H1 (cell line): ENCODE measurements at regions of chr10 and their contacts with region 1.

Region 1: DNA sequence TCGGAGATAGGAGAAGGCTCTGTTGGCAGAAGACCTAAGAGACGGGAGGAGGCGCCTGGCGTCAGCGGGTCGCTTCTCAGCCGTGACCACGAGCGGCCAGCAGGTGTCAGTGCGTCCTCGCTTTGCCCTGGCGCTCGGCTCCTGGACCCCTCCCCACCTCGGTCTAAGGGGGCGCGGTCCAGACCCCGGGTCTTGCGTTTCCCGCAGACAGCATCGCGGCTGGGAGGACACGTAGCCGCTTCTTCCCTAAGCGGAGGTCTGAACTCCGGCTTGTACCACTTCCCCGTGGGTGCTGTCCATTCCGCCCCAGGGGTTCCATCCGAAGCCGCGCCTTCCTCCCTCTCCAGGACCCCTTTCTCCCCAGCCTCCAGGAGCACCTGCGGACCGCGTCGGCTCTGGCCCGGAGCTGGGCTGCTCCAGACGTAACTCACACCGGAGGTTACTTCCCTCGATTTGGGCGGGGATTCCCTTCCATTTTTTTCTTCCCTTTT is 593 bp upstream of the ADRA2A start:
- DNase-seq: peak; percentile 63 to 96
- H3K4me3 ChIP-seq: peak overlapping the region; percentile 44 to 75 (median 70)
- H3K27ac ChIP-seq: no peak overlapping the region
- H3K4me1 ChIP-seq: peaks cover 0 to 7% (median 2%) of the 10 kb centered on the region in 4 experiments; a peak in 4 of 7 replicates
- H3K27me3 ChIP-seq: peaks cover 12 to 27% (median 24%) of the 10 kb centered on the region in 4 experiments
- CTCF ChIP-seq: peak; percentile 91 to 98 (median 98)
- EP300 ChIP-seq: no peak; a peak in 1 of 3 replicates
- POLR2A ChIP-seq: no peak
- RAD21 ChIP-seq: peak; percentile 98 to 99

Region 2: DNA sequence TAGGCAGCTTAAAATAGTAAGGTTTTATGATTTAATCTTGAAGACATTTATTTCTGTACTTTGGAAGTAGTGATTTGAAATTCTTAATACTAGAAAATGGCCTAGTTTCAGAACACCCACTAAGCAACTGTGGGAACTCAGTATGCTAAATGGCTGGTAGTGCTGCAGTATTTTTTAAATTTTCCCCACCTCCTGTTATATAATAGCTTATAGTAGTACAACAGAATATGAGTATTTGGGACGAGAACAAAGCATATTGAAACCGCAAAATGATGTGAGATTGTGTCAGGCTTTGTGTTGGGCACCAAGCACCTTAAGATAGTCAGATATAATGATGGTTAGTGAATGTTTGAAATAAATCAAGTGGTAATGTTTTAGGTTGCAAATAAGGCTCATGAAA is 148.8 kb before region 1 on chr10:
- CTCF ChIA-PET with region 1: no interaction called
- POLR2A ChIA-PET with region 1: no interaction called
- DNase-seq: no peak
- H3K4me3 ChIP-seq: no peak overlapping the region
- H3K27ac ChIP-seq: no peak overlapping the region
- H3K4me1 ChIP-seq: peaks cover 0 to 3% (median 0%) of the 10 kb centered on the region in 4 experiments; a peak in 1 of 7 replicates
- H3K27me3 ChIP-seq: no peaks in the 10 kb centered on the region
- CTCF ChIP-seq: no peak
- EP300 ChIP-seq: no peak
- POLR2A ChIP-seq: no peak
- RAD21 ChIP-seq: no peak

Region 3: DNA sequence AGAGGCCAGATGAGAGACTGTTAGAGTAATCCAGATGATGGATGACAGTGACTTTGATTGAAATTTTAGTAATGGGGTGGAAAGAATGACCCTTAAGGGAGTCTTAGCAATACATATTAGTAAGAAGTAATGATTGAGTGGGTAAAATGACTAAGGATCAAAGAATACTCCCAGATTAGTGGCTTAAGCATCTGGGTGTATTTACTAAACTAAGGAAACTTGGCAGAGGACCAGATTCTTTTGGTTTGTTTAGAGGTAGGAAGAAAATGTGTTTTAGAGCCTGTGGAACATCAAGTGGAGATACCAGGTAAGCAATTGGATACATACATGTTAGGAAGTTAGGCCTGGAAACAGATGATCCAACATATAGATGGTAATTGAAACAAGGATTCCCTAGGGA is 58.2 kb before region 1 on chr10:
- CTCF ChIA-PET with region 1: no interaction called
- POLR2A ChIA-PET with region 1: no interaction called
- DNase-seq: no peak
- H3K4me3 ChIP-seq: no peak overlapping the region
- H3K27ac ChIP-seq: no peak overlapping the region
- H3K4me1 ChIP-seq: no peaks in the 10 kb centered on the region
- H3K27me3 ChIP-seq: no peaks in the 10 kb centered on the region
- CTCF ChIP-seq: no peak
- EP300 ChIP-seq: no peak
- POLR2A ChIP-seq: no peak
- RAD21 ChIP-seq: no peak

Region 4: DNA sequence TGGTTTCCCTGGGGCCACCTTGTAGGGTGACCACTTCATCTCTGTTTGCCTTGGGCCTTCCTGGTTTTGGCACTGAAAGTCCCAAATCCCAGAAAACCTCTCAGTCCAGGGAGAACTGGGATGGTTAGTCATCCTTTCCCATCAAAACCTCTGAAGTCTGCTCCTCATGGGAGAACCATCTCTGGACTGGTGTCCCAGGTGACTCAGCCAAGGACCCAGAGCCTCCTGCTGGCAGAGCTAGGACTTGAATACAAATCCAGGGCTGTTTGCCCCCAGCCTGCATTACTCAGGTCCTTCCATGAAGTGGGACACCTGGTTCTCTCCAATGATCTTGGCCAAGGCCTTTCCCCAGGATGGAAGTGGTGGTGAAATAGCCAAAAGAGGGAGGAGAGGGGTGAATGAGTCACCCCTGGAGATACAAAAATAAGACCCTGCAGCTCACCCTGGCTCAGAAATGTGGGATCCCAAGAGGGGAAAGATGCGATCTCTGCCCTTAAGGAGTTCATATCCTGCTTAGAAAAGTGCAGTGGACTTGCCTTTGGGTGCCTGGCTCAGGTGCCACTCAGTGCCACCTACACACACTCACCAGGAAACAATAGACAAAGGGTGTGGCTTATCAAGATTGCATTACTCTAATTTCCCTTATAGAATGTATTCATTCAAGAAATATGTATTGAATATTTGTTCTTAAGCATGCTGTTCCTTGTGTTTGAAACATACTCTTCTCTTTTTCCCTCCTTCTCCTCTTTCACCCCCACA is 22.6 kb after region 1 on chr10:
- CTCF ChIA-PET with region 1: interaction called, 83 read pairs
- POLR2A ChIA-PET with region 1: no interaction called
- DNase-seq: no peak
- H3K4me3 ChIP-seq: no peak overlapping the region
- H3K27ac ChIP-seq: no peak overlapping the region
- H3K4me1 ChIP-seq: no peaks in the 10 kb centered on the region
- H3K27me3 ChIP-seq: no peaks in the 10 kb centered on the region
- CTCF ChIP-seq: no peak
- EP300 ChIP-seq: no peak
- POLR2A ChIP-seq: no peak
- RAD21 ChIP-seq: no peak

Region 5: GRCh38 chr10:111207500-111207899 is 131.3 kb after region 1 on chr10:
- CTCF ChIA-PET with region 1: interaction called, 68 read pairs
- POLR2A ChIA-PET with region 1: no interaction called
- DNase-seq: peak in 1 of 2 experiments; percentile 47
- H3K4me3 ChIP-seq: no peak overlapping the region
- H3K27ac ChIP-seq: no peak overlapping the region
- H3K4me1 ChIP-seq: peaks cover 0 to 3% (median 2%) of the 10 kb centered on the region in 4 experiments; a peak in 1 of 7 replicates
- H3K27me3 ChIP-seq: no peaks in the 10 kb centered on the region
- CTCF ChIP-seq: peak; percentile 59 to 69 (median 66)
- EP300 ChIP-seq: no peak
- POLR2A ChIP-seq: no peak
- RAD21 ChIP-seq: peak; percentile 78 to 80

Region 6: GRCh38 chr10:111281516-111281915 is 205.3 kb after region 1 on chr10:
- CTCF ChIA-PET with region 1: interaction called, 16 read pairs
- POLR2A ChIA-PET with region 1: no interaction called
- DNase-seq: peak in 1 of 2 experiments; percentile 48
- H3K4me3 ChIP-seq: no peak overlapping the region
- H3K27ac ChIP-seq: no peak overlapping the region
- H3K4me1 ChIP-seq: no peaks in the 10 kb centered on the region
- H3K27me3 ChIP-seq: peaks cover 0 to 1% (median 0%) of the 10 kb centered on the region in 4 experiments; a peak in 1 of 7 replicates
- CTCF ChIP-seq: peak in 2 of 3 experiments; percentile 52 to 56; a peak in 3 of 4 replicates
- EP300 ChIP-seq: no peak
- POLR2A ChIP-seq: no peak
- RAD21 ChIP-seq: peak; percentile 49 to 60; a peak in 3 of 4 replicates

Region 7: GRCh38 chr10:111344804-111345203 is 268.6 kb after region 1 on chr10:
- CTCF ChIA-PET with region 1: interaction called, 23 read pairs
- POLR2A ChIA-PET with region 1: no interaction called
- DNase-seq: no peak
- H3K4me3 ChIP-seq: no peak overlapping the region
- H3K27ac ChIP-seq: no peak overlapping the region
- H3K4me1 ChIP-seq: no peaks in the 10 kb centered on the region
- H3K27me3 ChIP-seq: no peaks in the 10 kb centered on the region
- CTCF ChIP-seq: peak in 2 of 3 experiments; percentile 45 to 68; a peak in 3 of 4 replicates
- EP300 ChIP-seq: no peak
- POLR2A ChIP-seq: no peak
- RAD21 ChIP-seq: peak; percentile 57